Gastrocnemius medialis (tissue), 4 donors: ENCODE measurements at regions of chr16 and their contacts with region 1.

Region 1: DNA sequence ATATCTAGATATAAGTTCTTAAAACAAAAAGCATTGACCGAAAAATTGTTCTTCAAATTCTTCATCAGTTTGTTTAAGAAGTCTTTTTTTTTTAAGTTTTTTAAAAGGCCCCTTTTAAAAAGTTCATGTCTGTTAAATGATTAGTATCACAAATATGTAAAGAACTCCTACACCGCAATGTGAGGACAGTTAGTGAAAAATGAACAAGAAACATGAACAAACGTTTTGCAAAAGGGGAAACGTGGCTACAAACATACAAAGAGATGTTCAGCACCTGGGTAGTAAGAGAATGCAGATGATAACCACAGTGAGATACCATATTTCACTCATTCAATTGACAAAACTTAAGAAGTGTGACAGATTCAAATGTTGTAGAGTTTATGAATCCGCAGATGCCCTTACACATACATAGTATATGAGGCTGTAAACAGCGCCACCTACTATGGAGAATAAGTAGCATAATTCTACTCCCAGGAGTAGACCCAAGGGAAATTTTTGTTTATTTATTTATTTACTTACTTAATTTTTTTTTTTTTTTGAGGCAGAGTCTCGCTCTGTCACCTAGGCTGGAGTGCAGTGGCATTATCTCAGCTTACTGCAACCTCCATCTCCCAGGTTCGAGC is 35.3 kb downstream of the GAN start:
- DNase-seq: no peak
- ATAC-seq: no peak
- H3K4me3 ChIP-seq: no peak overlapping the region
- H3K27ac ChIP-seq: no peak overlapping the region
- H3K4me1 ChIP-seq: no peaks in the 10 kb centered on the region
- H3K27me3 ChIP-seq: no peaks in the 10 kb centered on the region
- CTCF ChIP-seq: no peak
- POLR2A ChIP-seq: no peak

Region 2: DNA sequence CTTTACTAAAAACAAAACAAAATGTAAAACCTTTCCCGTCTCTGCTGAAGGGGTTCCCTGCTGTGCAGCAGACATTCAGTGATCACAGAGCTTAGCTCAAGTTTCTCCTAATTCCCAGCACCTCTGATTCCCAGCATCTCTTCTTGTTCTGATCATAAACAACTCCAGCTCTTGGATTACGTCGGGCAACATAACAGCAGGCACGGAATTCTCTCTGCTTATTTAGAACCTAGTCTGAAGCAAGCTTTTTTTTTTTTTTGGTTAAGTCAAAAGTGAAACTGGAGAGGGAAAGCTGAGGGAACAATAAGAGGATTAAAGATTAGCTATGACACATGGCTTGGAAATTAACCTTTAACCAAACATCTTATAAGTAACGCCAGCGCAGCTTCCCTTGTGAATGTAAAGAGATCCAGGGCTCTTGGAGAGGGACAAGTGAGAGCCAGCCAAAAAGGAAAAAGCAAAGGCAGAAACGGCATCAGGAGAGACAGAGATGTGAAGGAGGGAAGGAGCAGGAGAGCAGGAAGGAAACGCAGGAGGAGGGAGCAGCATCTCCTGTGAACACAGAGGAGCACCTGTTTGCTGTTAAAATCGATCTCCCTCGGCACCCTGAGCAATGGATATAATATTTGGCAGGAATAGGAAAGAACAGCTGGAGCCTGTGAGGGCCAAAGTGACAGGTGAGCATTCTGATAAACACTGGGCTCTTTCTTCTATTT is 111.7 kb before region 1 on chr16 and contains the start of gene BCO1:
- in situ Hi-C with region 1: loop called in 1 of 4 experiments (anchors 25 kb)
- intact Hi-C with region 1: no loop called
- DNase-seq: no peak
- ATAC-seq: peak; percentile 9 to 13
- H3K4me3 ChIP-seq: peak within 1 kb of the TSS; percentile 13 to 47 (median 25)
- H3K27ac ChIP-seq: peak within 1 kb of the TSS; percentile 71 to 83 (median 76)
- H3K4me1 ChIP-seq: peaks cover 10 to 13% of the 10 kb centered on the region in 2 donors
- H3K27me3 ChIP-seq: no peaks in the 10 kb centered on the region
- CTCF ChIP-seq: no peak
- POLR2A ChIP-seq: no peak
- total RNA-seq, gene BCO1: not detected